HepG2 (cell line): ENCODE measurements at regions of chr22 and their contacts with region 1.

Region 1: GRCh38 chr22:39240828-39241793 is 3.7 kb downstream of the PDGFB start:
- DNase-seq: peak; percentile 91
- ATAC-seq: peak; percentile 55
- H3K4me3 ChIP-seq: peak overlapping the region; percentile 67 to 88 (median 75)
- H3K27ac ChIP-seq: peak overlapping the region; percentile 93
- H3K4me1 ChIP-seq: peaks cover 35% of the 10 kb centered on the region
- H3K27me3 ChIP-seq: no peaks in the 10 kb centered on the region; a peak in 1 of 5 replicates
- CTCF ChIP-seq: peak; percentile 61
- EP300 ChIP-seq: peak in 1 of 2 experiments; percentile 55; a peak in 2 of 4 replicates
- POLR2A ChIP-seq: peak; percentile 49 to 80; a peak in 3 of 4 replicates
- RAD21 ChIP-seq: peak; percentile 52

Region 2: GRCh38 chr22:39013942-39014722 is 227.0 kb before region 1 on chr22 and contains the start of gene APOBEC3C:
- CTCF ChIA-PET with region 1: no interaction called
- POLR2A ChIA-PET with region 1: no interaction called
- in situ Hi-C with region 1: no loop called
- intact Hi-C with region 1: no loop called
- DNase-seq: peak; percentile 75
- ATAC-seq: peak; percentile 94
- H3K4me3 ChIP-seq: peak within 1 kb of the TSS; percentile 77 to 86 (median 78)
- H3K27ac ChIP-seq: peak within 1 kb of the TSS; percentile 67
- H3K4me1 ChIP-seq: peaks cover 49% of the 10 kb centered on the region
- H3K27me3 ChIP-seq: no peaks in the 10 kb centered on the region; a peak in 2 of 5 replicates
- CTCF ChIP-seq: peak; percentile 44
- EP300 ChIP-seq: no peak
- POLR2A ChIP-seq: peak; percentile 71 to 81
- RAD21 ChIP-seq: no peak
- total RNA-seq, gene APOBEC3C: 8.9 and 10.8 TPM in 2 replicates

Region 3: GRCh38 chr22:39230261-39231196 is 10.6 kb before region 1 on chr22:
- CTCF ChIA-PET with region 1: no interaction called
- POLR2A ChIA-PET with region 1: interaction called, 41 read pairs
- in situ Hi-C with region 1: no loop called
- intact Hi-C with region 1: no loop called
- DNase-seq: peak; percentile 90
- ATAC-seq: peak; percentile 72
- H3K4me3 ChIP-seq: peak overlapping the region in 1 of 3 experiments; percentile 5; a peak in 1 of 6 replicates
- H3K27ac ChIP-seq: no peak overlapping the region
- H3K4me1 ChIP-seq: peaks cover 21% of the 10 kb centered on the region
- H3K27me3 ChIP-seq: no peaks in the 10 kb centered on the region
- CTCF ChIP-seq: no peak; the same call in 1 of the 2 replicates
- EP300 ChIP-seq: peak in 1 of 2 experiments; percentile 79; a peak in 2 of 4 replicates
- POLR2A ChIP-seq: no peak
- RAD21 ChIP-seq: no peak

Region 4: GRCh38 chr22:39300186-39300830 is 59.2 kb after region 1 on chr22:
- CTCF ChIA-PET with region 1: no interaction called
- POLR2A ChIA-PET with region 1: interaction called, 9 read pairs
- in situ Hi-C with region 1: no loop called
- intact Hi-C with region 1: loop called (anchors 5 kb)
- DNase-seq: no peak
- ATAC-seq: peak; percentile 55
- H3K4me3 ChIP-seq: peak overlapping the region; percentile 40 to 68 (median 43)
- H3K27ac ChIP-seq: peak overlapping the region; percentile 32
- H3K4me1 ChIP-seq: peaks cover 97% of the 10 kb centered on the region
- H3K27me3 ChIP-seq: no peaks in the 10 kb centered on the region; a peak in 2 of 5 replicates
- CTCF ChIP-seq: peak; percentile 25; the same call in 1 of the 2 replicates
- EP300 ChIP-seq: no peak
- POLR2A ChIP-seq: no peak
- RAD21 ChIP-seq: no peak

Region 5: DNA sequence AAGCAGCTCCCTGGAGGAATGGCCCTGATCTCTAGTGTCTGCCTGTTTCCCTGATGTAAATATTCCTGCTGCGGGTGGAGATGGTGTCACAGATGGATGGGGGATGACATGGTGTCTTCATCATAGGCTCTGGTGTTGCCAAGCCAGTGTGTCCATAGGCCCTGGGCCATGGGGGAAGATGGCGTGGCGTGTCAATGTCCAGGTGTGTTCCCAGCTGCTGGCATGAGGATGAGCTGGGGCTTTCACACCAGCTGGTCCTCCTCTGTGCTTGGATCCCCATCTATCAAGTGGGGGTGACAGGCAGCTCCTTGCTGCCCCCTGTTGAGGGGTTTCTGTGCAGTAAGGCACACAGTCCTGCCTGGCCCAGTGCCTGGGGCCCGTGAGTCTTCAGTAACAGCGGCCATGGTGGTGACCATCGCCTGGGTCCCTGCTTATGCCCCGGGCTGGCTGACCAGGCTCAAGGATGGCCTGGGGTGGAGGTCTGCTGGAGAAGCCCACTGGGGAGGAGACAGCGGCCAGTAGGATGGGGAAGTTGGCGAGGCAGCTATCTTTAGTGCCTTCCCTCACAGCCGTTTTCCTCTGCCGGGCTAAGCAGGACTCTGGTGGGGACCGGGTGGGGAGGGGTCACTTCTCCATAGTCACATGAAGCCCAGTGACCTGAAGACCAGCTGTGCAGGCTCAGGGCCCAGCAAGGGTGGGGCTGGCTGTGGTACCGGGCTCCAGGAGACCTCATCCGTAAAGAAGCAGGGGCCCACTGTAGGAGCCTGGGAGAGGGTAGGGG is 65.7 kb after region 1 on chr22:
- CTCF ChIA-PET with region 1: no interaction called
- POLR2A ChIA-PET with region 1: interaction called, 22 read pairs
- in situ Hi-C with region 1: no loop called
- intact Hi-C with region 1: no loop called
- DNase-seq: no peak
- ATAC-seq: peak; percentile 8
- H3K4me3 ChIP-seq: no peak overlapping the region
- H3K27ac ChIP-seq: no peak overlapping the region
- H3K4me1 ChIP-seq: peaks cover 67% of the 10 kb centered on the region
- H3K27me3 ChIP-seq: no peaks in the 10 kb centered on the region
- CTCF ChIP-seq: peak; percentile 84
- EP300 ChIP-seq: no peak
- POLR2A ChIP-seq: no peak
- RAD21 ChIP-seq: peak; percentile 60